Prostate gland (tissue), 2 donors: ENCODE measurements at regions of chr5 and their contacts with region 1.

Region 1: DNA sequence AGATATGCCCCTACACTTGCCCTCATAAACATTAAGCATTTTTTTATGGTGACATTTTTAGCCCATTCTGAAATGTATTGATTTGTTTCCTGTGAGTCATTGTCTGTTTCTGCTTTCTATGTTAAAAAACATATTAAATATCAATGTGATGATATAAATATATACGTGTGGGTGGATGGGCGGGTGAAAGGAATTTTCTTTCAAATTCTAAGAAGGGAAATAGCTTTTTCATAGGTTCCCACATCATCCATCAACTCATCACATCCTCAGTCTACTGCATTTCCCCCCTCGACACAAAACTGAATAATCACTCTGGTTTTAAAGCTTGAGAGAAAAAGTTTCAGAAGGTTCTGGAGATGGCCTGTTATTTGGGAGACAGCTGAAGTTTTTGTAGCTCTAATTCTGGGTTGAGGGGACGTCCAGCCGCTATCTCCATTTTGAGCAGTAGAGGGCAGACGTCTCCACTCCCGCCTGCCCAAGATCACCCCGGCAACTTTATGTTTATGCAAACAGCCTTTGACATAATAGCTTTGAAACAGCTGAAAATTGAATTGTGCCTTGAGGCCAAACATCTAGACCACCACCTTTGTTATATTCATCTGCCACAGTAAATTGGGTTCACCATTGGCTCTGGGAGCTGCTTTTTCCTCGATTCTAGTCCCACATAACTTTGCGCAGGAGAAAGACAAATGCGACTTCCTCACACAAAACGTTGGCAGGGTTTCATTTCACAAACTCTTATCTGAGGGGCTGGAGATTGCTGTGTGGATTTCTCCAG is 216.2 kb upstream of the CLINT1 start:
- DNase-seq: peak; percentile 16
- H3K4me3 ChIP-seq: no peak overlapping the region
- H3K27ac ChIP-seq: no peak overlapping the region
- H3K4me1 ChIP-seq: no peaks in the 10 kb centered on the region
- H3K27me3 ChIP-seq: no peaks in the 10 kb centered on the region
- CTCF ChIP-seq: peak; percentile 41 to 61 (median 49)
- POLR2A ChIP-seq: no peak

Region 2: GRCh38 chr5:158174918-158175851 is 100.0 kb after region 1 on chr5:
- intact Hi-C with region 1: loop called (anchors 5 kb)
- DNase-seq: peak; percentile 55
- H3K4me3 ChIP-seq: no peak overlapping the region
- H3K27ac ChIP-seq: peak overlapping the region in 1 of 2 donors; percentile 33
- H3K4me1 ChIP-seq: peaks cover 4% of the 10 kb centered on the region
- H3K27me3 ChIP-seq: no peaks in the 10 kb centered on the region
- CTCF ChIP-seq: peak; percentile 19 to 70 (median 61)
- POLR2A ChIP-seq: no peak

Region 3: GRCh38 chr5:159100025-159100781 is 1025.0 kb after region 1 on chr5:
- intact Hi-C with region 1: loop called (anchors 5 kb)
- DNase-seq: peak; percentile 51
- H3K4me3 ChIP-seq: peak overlapping the region; percentile 28 to 35
- H3K27ac ChIP-seq: peak overlapping the region; percentile 58 to 68
- H3K4me1 ChIP-seq: no peaks in the 10 kb centered on the region
- H3K27me3 ChIP-seq: peaks cover 40% of the 10 kb centered on the region
- CTCF ChIP-seq: no peak
- POLR2A ChIP-seq: peak; percentile 59